HAP-1 (cell line): ENCODE measurements at regions of chrX and their contacts with region 1.

Region 1: DNA sequence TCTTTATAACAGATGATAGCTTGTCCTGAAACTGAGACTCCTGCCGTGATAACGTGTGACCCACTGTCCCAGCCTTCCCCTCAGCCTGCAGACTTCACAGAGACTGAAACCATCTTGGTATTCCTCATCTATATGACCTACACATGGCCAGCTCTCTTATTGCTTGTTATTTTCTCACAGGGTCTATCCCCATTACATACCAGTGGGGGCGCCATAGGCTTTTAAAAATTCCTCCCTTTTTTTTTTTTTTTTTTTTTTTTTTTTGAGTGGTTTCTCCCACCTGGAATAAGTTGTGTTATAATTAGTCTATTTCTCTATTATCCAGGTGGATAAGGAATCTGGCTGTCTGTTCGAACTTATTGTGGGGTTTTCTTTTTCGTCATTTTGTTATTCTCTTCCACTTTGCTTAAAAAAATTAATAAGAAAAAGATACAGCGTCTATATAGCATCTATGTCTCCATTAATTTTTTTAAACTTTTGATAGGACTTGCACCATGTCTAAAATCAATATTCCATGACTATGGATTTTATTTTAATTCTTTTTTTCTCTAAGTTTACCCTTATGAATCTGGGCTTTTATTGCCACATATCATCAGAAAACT is 47.2 kb downstream of the GYG2 start:
- DNase-seq: peak; percentile 36 to 46
- H3K4me3 ChIP-seq: no peak overlapping the region
- H3K4me1 ChIP-seq: no peaks in the 10 kb centered on the region
- H3K27me3 ChIP-seq: no peaks in the 10 kb centered on the region

Region 2: GRCh38 chrX:2984344-2984743 is 108.4 kb after region 1 on chrX:
- in situ Hi-C with region 1: no loop called
- DNase-seq: no peak
- H3K4me3 ChIP-seq: no peak overlapping the region
- H3K4me1 ChIP-seq: no peaks in the 10 kb centered on the region
- H3K27me3 ChIP-seq: no peaks in the 10 kb centered on the region

Region 3: GRCh38 chrX:3006495-3006894 is 130.6 kb after region 1 on chrX and contains the start of gene ARSH:
- in situ Hi-C with region 1: no loop called
- DNase-seq: no peak
- H3K4me3 ChIP-seq: no peak within 1 kb of the TSS
- H3K4me1 ChIP-seq: no peaks in the 10 kb centered on the region
- H3K27me3 ChIP-seq: no peaks in the 10 kb centered on the region

Region 4: DNA sequence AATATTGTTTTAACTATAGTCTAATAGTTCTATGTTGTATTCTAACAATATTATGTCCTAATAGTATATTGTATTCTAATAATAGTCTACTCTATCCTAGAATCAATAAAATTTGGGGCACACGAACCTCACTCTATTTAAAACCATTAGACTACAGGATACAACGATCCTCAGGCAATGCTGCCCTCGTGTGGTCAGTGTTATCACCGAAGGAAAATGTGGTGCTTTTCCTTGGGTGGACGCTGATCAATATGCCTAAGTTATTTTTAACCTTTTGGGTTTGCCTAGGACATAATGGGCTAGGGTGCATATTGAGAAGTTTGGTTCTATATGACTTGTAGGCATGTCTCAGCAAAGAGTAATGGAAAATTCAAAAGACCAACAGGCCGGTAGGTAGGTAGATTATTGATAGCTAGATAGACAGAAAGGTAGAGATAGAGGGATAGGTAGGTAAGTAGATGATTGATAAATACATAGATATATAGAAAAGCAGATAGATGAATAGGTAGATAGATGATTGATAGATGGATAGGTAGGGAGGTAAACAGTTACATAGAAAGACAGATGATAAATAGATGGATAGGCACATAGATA is 762.5 kb after region 1 on chrX:
- in situ Hi-C with region 1: loop called (anchors 25 kb)
- DNase-seq: peak; percentile 15 to 72
- H3K4me3 ChIP-seq: no peak overlapping the region
- H3K4me1 ChIP-seq: no peaks in the 10 kb centered on the region
- H3K27me3 ChIP-seq: no peaks in the 10 kb centered on the region